ENCODE measurements at regions of chr2 and their contacts with region 1.

Region 1: DNA sequence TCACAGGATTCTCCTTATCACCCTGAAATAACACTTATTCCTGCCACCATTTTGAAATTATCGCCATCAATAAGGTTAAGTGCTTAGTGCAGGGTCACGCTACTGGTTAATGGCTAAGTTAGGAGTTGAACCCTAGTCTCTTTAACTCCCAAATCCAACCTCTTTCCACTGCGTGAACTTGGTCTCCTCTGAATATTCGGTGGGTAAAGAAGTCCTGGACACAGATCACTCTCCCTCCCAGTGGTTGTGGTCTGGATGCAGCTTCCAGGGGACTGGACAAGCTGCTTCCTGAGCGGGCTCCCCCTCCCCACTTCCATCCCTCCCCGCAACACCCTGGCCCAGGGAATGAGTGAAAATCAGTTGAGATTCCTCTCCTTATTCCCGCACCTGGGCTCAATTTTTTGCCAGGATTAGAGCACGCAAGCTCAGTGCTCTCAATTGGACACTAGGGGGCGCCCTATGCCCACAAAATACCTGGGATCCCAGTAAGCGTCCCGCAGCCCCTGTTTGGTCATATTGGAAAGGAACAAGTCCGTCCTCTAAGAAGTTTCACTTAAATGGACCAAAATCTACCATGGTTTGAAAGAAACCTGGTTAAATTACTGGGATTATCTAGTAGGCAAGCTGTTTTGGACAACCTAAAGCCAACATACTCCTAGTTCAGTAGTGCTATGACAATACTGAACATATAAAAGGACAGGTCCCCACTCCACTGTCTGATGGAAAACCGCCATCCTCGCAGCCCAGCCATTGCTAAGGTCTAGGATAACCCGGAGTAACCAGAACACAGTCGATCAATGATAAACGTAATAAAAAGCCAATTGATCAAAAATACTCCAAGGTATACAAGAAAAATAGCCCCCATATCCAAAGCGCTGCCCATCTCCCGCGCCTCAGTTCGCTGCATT is 40.4 kb downstream of the DHRS9 start:
- DNase-seq: peak; percentile 86
- ATAC-seq: peak; percentile 98
- H3K4me3 ChIP-seq: no peak overlapping the region
- H3K27ac ChIP-seq: no peak overlapping the region
- H3K4me1 ChIP-seq: peaks cover 13% of the 10 kb centered on the region; the same call in 1 of the 2 replicates
- H3K27me3 ChIP-seq: no peaks in the 10 kb centered on the region
- CTCF ChIP-seq: peak; percentile 95

Region 2: DNA sequence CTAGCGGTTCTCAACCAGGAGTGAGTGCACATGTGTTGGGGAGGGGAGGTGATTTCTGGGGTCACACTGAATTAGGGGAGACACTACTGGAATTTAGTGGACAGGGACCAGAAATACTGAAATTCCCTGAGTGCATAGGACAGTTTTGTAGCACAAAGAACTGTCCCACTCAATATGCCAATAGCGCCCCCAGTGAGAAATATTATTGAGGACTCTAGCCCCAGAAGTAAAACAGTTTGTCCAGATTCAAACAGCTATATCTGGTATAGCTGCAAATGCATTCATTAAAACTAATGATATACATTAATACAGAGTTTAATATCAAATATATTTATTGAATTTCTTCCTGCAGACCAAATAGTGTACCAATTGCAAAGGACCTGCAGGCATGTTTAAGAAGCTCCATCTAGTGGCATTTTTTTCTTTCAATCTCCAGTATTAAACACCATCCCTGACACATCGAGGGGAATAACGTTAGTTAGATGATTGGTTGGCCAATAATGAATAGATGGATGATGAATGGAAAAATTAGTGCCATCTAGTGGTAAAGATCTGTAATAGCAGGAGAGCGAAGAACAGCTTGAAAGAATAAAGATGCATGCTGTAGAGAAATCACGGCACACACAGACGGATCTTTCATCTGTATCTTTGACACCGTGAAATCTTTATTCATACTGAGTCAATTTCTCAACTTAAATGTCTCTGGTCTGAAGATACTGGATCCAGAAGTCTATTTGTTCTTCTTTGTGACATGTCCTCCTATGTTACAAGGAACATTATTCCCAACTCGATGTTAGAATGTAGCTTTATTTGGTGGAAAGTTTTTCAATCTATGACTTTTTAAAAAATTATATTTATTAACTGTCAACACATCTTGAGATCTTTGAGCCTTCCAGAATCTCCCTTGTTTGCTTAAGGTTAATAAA is 22.1 kb after region 1 on chr2:
- CTCF ChIA-PET with region 1: interaction called, 10 read pairs
- POLR2A ChIA-PET with region 1: no interaction called
- intact Hi-C with region 1: loop called (anchors 2 kb)
- DNase-seq: peak; percentile 81
- ATAC-seq: peak; percentile 70
- H3K4me3 ChIP-seq: no peak overlapping the region
- H3K27ac ChIP-seq: no peak overlapping the region
- H3K4me1 ChIP-seq: 0 out of 2 replicates have a peak, but pooled peaks cover 8% of the 10 kb centered on the region
- H3K27me3 ChIP-seq: no peaks in the 10 kb centered on the region
- CTCF ChIP-seq: peak; percentile 87

Region 3: GRCh38 chr2:169141713-169142352 is 32.1 kb after region 1 on chr2:
- CTCF ChIA-PET with region 1: interaction called, 3 read pairs
- POLR2A ChIA-PET with region 1: no interaction called
- intact Hi-C with region 1: loop called (anchors 2 kb)
- DNase-seq: peak; percentile 82
- ATAC-seq: peak; percentile 80
- H3K4me3 ChIP-seq: no peak overlapping the region
- H3K27ac ChIP-seq: no peak overlapping the region
- H3K4me1 ChIP-seq: no peaks in the 10 kb centered on the region
- H3K27me3 ChIP-seq: no peaks in the 10 kb centered on the region
- CTCF ChIP-seq: peak; percentile 87

Region 4: GRCh38 chr2:169221745-169222369 is 112.1 kb after region 1 on chr2:
- CTCF ChIA-PET with region 1: interaction called, 16 read pairs
- POLR2A ChIA-PET with region 1: no interaction called
- intact Hi-C with region 1: loop called (anchors 2 kb)
- DNase-seq: peak; percentile 73
- ATAC-seq: peak; percentile 82
- H3K4me3 ChIP-seq: 0 out of 2 replicates have a peak overlapping the region, but pooled peaks have one; percentile 29
- H3K27ac ChIP-seq: no peak overlapping the region
- H3K4me1 ChIP-seq: 0 out of 2 replicates have a peak, but pooled peaks cover 3% of the 10 kb centered on the region
- H3K27me3 ChIP-seq: peaks cover 15% of the 10 kb centered on the region
- CTCF ChIP-seq: peak; percentile 79

Region 5: GRCh38 chr2:169275696-169276444 is 166.1 kb after region 1 on chr2:
- CTCF ChIA-PET with region 1: interaction called, 5 read pairs
- POLR2A ChIA-PET with region 1: no interaction called
- intact Hi-C with region 1: loop called (anchors 1 kb)
- DNase-seq: peak; percentile 49
- ATAC-seq: peak; percentile 29; the same call in 1 of the 2 replicates
- H3K4me3 ChIP-seq: no peak overlapping the region
- H3K27ac ChIP-seq: no peak overlapping the region
- H3K4me1 ChIP-seq: no peaks in the 10 kb centered on the region
- H3K27me3 ChIP-seq: peaks cover 50% of the 10 kb centered on the region
- CTCF ChIP-seq: peak; percentile 61

Region 6: DNA sequence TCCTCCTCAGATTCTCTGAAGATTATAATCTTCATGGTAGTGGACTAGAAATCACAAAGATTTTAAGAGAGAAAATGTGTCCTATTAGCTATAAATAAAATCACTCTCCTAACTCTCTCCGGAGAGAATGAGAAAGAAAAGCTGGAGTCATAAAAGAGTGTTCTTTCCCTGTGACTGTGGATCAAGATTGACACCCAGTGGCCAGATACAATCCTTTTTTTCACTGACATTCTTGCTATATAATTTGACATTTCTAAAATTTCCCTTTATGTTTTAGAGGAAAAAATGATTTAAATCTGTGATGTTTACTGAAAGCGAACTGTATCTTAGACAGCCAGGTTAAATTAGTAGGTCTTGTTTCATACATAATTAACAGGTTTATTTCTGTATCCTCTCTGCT is 287.9 kb after region 1 on chr2:
- CTCF ChIA-PET with region 1: interaction called, 3 read pairs
- POLR2A ChIA-PET with region 1: no interaction called
- intact Hi-C with region 1: loop called (anchors 1 kb)
- DNase-seq: peak; percentile 36
- ATAC-seq: no peak
- H3K4me3 ChIP-seq: no peak overlapping the region
- H3K27ac ChIP-seq: no peak overlapping the region
- H3K4me1 ChIP-seq: no peaks in the 10 kb centered on the region
- H3K27me3 ChIP-seq: peaks cover 49% of the 10 kb centered on the region
- CTCF ChIP-seq: peak; percentile 61